ENCODE measurements at regions of chr3 and their contacts with region 1.

Region 1: GRCh38 chr3:54830658-54831057 is 97.2 kb downstream of the LRTM1 start:
- DNase-seq: peak; percentile 14
- H3K4me3 ChIP-seq: no peak overlapping the region
- H3K27ac ChIP-seq: no peak overlapping the region
- H3K4me1 ChIP-seq: peaks cover 10% of the 10 kb centered on the region; the same call in 1 of the 2 replicates
- H3K27me3 ChIP-seq: no peaks in the 10 kb centered on the region

Region 2: GRCh38 chr3:54056521-54056920 is 774.1 kb before region 1 on chr3:
- in situ Hi-C with region 1: no loop called
- DNase-seq: peak; percentile 4
- H3K4me3 ChIP-seq: no peak overlapping the region
- H3K27ac ChIP-seq: no peak overlapping the region
- H3K4me1 ChIP-seq: no peaks in the 10 kb centered on the region
- H3K27me3 ChIP-seq: no peaks in the 10 kb centered on the region

Region 3: DNA sequence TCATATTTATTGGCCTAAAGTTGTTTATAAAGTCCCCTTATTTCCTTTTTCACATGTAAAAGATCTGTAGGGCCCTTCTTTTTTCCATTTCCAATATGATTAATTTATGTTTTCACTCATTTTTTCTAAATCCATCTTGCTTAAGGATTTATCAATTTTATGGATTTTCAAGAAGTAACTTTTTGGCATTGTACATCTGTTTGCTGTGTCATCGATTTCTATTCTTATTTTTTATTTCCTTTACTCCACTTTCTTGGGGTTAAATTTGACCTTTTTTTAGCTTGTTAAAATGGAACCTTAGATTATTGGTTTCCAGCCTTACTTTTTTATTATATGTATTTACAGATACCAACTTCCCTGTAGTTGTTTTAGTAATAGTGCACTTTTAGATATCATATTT is 110.7 kb before region 1 on chr3:
- in situ Hi-C with region 1: no loop called
- DNase-seq: no peak
- H3K4me3 ChIP-seq: no peak overlapping the region
- H3K27ac ChIP-seq: no peak overlapping the region
- H3K4me1 ChIP-seq: no peaks in the 10 kb centered on the region
- H3K27me3 ChIP-seq: no peaks in the 10 kb centered on the region

Region 4: DNA sequence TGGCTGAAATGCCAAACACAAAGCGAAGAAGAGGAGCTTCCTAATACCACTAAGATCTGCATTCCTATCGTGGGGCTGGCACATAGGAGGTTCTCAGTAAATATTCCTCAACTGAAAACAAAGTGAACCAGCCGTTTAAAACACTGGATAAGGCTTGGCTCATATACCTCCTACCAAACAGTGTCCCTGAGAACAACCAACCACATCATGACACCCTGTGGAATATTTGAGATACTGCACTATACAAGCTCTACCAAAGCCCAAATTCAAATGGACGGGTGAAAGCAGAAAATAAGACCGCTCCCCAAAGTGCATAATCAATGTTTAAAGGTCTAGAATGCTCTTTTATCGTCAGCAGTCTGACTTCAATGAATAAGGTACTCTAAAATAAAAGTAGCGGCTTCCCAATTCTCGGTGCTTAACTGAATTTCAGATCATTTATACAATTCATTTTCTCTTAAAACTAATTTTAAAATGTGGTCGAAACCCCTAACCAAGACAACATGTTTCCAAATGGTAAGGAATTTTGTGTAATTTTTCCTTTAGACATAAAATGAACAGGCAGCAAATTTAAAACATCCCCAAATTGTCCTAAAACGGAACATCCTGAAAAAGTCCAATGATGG is 1211.8 kb after region 1 on chr3:
- in situ Hi-C with region 1: loop called (anchors 25 kb)
- DNase-seq: peak; percentile 64
- H3K4me3 ChIP-seq: no peak overlapping the region
- H3K27ac ChIP-seq: no peak overlapping the region
- H3K4me1 ChIP-seq: no peaks in the 10 kb centered on the region
- H3K27me3 ChIP-seq: peaks cover 42% of the 10 kb centered on the region

Region 5: DNA sequence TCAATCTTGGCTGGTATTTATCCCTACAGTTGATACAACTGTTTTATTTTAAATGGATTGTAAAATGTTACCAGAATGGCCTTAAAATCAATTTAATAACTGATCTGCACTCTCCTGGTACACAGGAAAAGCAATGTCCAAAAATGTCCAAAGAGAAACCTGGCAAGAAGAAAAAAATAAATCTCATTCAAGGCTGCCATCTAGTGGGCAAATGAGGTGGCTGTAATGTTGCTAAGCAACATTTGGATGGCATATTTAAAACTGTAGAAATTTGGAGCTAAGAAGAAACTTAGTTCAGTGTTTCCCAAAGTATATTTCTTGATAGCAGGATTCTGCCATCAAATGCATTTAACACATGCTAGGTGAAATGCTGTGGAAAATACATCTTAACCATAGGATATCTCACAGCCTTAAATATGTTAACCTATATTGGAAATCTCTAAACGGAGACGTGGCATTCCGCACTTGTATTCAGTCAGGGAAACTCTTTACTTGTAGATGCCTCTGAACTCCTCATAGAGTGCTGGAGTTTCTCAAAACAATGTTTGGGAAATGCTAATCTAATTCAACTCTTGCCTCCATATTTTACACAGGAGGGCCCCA is 1420.8 kb after region 1 on chr3:
- in situ Hi-C with region 1: loop called (anchors 25 kb)
- DNase-seq: peak; percentile 60
- H3K4me3 ChIP-seq: no peak overlapping the region
- H3K27ac ChIP-seq: no peak overlapping the region
- H3K4me1 ChIP-seq: no peaks in the 10 kb centered on the region
- H3K27me3 ChIP-seq: peaks cover 4% of the 10 kb centered on the region; the same call in 1 of the 2 replicates

Measured in GM23248 (cell line).